ENCODE measurements at regions of chr12 and their contacts with region 1.

Region 1: DNA sequence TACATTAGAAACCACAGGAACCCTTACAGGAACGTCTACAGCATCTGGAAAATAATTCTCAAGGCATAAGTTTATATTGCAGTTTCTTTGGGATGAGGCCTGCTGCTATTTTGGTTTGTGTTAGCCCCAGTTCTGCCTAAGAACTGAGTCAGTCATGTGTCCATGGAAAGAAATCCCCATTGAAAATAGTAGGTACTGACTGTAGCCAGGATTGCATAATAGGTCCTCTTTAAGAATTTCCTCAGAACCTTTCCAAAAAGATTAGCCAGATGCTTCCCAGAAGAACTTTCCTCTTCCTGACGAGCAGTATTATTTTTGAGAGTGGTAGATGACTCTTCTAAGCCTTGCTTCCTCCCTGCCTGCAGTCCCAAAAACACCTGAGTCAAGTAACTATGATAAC is 52.6 kb downstream of the RASSF8 start:
- DNase-seq: no peak
- ATAC-seq: peak; percentile 79 to 95 (median 91)
- H3K4me3 ChIP-seq: no peak overlapping the region
- H3K27ac ChIP-seq: peak overlapping the region; percentile 5 to 77 (median 57)
- H3K4me1 ChIP-seq: peaks cover 13 to 60% (median 43%) of the 10 kb centered on the region in 9 donors
- H3K27me3 ChIP-seq: no peaks in the 10 kb centered on the region
- CTCF ChIP-seq: no peak

Region 2: GRCh38 chr12:25977047-25977446 is 34.1 kb before region 1 on chr12:
- intact Hi-C with region 1: loop called in 1 of 10 experiments (anchors 5 kb)
- DNase-seq: no peak
- ATAC-seq: no peak
- H3K4me3 ChIP-seq: no peak overlapping the region
- H3K27ac ChIP-seq: peak overlapping the region in 1 of 10 donors; percentile 10
- H3K4me1 ChIP-seq: peaks cover 3 to 70% (median 22%) of the 10 kb centered on the region in 9 donors
- H3K27me3 ChIP-seq: no peaks in the 10 kb centered on the region
- CTCF ChIP-seq: no peak

Region 3: DNA sequence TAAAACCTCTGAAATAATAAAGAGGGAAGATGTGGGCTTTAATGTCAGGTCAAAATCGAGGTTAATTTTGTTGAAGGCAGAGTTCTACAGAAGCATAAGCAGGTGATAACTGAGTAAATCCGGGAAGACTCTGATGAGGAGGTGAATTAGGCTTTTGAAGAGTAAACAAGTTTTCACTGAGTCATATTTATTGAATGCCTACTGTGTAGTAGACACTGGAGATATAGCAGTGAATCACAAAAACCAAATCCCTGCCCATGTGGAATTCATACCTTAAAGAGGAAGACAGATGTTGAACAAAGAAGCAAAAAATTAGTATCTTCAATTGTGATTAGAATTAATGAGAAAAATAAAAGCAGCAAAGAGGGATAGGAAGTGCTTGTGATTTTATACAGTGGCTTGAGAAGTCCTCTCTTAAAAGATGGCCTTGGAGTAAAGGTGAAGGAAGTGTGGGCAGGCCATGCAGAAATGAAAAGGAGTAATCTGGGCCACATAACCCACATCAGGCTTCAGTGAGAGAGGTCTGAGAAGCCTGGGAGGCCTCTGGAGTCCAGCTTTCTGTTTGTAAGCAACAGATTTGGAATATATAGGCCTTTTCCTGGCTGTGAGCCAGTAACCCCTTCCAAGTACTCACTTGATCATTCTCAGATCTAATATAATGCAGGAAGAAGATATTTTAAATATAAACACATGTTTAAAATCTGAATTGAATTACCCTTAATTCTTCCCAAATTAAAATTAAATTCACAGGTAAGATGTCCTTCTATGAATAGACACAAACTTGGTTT is 67.0 kb after region 1 on chr12:
- intact Hi-C with region 1: no loop called
- DNase-seq: no peak
- ATAC-seq: no peak
- H3K4me3 ChIP-seq: no peak overlapping the region
- H3K27ac ChIP-seq: no peak overlapping the region
- H3K4me1 ChIP-seq: no peaks in the 10 kb centered on the region
- H3K27me3 ChIP-seq: no peaks in the 10 kb centered on the region
- CTCF ChIP-seq: no peak